Naive thymus-derived CD8-positive, alpha-beta T cell (primary cell): ENCODE measurements at regions of chr17 and their contacts with region 1.

Region 1: DNA sequence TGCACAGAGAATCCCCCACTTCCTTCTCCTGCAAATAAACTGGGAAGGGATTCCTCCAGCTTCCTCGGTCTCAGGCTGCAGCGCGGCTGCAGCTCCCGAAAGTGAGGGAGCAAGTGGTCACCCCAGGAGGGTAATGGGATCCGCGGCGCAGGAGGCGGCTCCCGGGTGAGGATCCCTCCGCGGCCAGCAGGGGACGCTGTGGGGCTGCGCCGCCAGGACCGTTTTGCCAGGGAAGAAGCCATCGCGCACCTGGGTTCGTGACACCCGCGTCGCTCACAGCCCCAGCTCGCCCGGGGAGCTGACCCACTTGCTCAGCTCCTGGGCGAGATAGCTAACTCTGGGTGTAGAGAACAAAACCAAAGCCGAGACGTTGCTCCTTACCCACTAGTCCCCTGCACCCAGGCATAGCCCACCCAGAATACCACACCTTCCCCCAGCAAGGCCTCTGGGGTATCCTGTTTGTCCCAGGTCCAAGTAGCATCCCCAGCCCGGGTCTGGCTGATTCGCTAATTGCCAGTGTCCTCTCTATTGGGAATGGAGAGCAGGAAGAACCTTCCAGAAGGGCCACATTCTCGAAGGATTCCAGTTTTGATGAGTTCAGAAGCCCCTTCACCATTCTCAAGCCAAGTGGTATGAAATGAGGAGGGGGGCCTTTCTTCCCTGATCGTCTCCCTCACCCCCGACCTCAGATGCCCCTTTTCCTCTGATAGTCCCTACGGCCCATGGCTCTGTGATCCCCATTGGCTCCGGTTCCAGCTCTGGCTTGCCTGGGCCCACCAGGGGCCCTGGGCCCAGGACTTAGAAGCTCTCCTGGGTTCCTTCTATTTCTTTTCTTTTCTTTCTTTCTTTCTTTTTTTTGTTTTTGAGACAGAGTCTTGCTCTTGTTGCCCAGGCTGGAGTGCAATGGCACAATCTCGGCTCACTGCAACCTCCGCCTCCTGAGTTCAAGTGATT is 14.1 kb downstream of the CYGB start:
- DNase-seq: peak; percentile 63 to 88 (median 80)
- ATAC-seq: peak; percentile 59 to 75
- H3K4me3 Mint-ChIP-seq: peak overlapping the region in 9 of 10 donors; percentile 31 to 81 (median 61)
- H3K27ac Mint-ChIP-seq: peak overlapping the region; percentile 58 to 96 (median 89)
- H3K4me1 Mint-ChIP-seq: peaks cover 29 to 51% (median 37%) of the 10 kb centered on the region in 4 donors
- H3K27me3 Mint-ChIP-seq: no peaks in the 10 kb centered on the region

Region 2: GRCh38 chr17:76427501-76428231 is 95.7 kb before region 1 on chr17:
- POLR2A ChIA-PET with region 1: no interaction called
- DNase-seq: no peak
- ATAC-seq: no peak
- H3K4me3 Mint-ChIP-seq: peak overlapping the region in 1 of 10 donors; percentile 5
- H3K27ac Mint-ChIP-seq: peak overlapping the region in 4 of 10 donors; percentile 8 to 71 (median 52)
- H3K4me1 Mint-ChIP-seq: peaks cover 18 to 57% (median 28%) of the 10 kb centered on the region in 4 donors
- H3K27me3 Mint-ChIP-seq: no peaks in the 10 kb centered on the region

Region 3: GRCh38 chr17:76540381-76541300 is 17.3 kb after region 1 on chr17:
- POLR2A ChIA-PET with region 1: interaction called, 46 read pairs
- DNase-seq: peak in 1 of 10 donors; percentile 61
- ATAC-seq: peak in 1 of 2 donors; percentile 36
- H3K4me3 Mint-ChIP-seq: peak overlapping the region in 3 of 10 donors; percentile 6 to 49 (median 18)
- H3K27ac Mint-ChIP-seq: peak overlapping the region in 1 of 10 donors; percentile 33
- H3K4me1 Mint-ChIP-seq: peaks cover 12 to 44% (median 36%) of the 10 kb centered on the region in 4 donors
- H3K27me3 Mint-ChIP-seq: peaks cover 0 to 21% (median 7%) of the 10 kb centered on the region in 5 donors

Region 4: DNA sequence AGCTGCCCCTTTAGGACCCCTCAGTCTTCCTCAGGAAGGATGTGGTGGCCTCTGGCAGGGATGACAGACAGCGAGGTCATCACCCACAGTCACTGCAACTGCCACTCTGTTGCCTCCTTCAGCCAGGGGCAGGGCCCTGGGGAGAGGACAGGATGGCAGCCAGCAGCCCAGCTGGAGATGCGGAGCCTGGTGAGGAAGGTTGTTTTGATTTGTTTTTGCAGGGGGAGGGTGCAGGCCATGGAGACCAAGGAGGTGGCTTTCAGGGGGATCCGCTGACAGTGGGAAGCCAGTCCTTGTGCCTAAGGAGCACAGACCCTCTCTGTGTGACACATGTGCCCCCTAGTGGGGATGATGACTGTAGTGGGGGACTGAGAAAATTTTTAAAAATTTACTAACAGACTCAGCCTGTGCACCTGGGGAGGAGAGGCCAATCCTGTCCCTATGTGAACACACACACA is 23.9 kb after region 1 on chr17:
- POLR2A ChIA-PET with region 1: interaction called, 35 read pairs
- DNase-seq: peak; percentile 42 to 88 (median 66)
- ATAC-seq: peak; percentile 97 to 98
- H3K4me3 Mint-ChIP-seq: no peak overlapping the region
- H3K27ac Mint-ChIP-seq: peak overlapping the region in 2 of 10 donors; percentile 69 to 85
- H3K4me1 Mint-ChIP-seq: peaks cover 7 to 15% (median 13%) of the 10 kb centered on the region in 4 donors
- H3K27me3 Mint-ChIP-seq: peaks cover 0 to 2% (median 0%) of the 10 kb centered on the region in 5 donors